Psoas muscle (tissue), 8 donors: ENCODE measurements at regions of chr17 and their contacts with region 1.

Region 1: DNA sequence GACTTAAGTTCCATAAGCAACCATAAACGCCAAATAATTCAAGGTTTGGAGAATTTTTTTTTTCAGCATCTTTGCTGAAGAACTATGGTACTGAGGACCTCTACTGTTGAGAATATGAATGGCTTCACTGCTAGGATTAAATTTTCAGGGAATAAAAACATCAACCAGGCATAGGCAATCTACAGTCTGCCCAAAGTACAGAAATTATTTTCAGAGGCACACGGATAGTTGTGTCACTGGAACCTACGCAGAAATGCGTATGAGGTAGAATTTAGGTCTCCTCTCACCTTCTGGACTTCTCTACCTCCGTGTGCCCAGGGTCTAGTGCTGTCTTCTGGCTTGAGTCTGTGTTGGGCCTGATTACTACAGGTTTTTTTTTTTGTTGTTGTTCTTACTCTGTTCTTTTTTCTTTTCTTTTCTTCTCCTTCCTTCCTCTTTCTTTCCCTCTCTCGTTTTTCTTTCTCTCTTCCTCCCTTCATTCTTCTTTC is 39.7 kb downstream of the NACA2 start:
- DNase-seq: no peak
- ATAC-seq: no peak
- H3K4me3 ChIP-seq: no peak overlapping the region
- H3K27ac ChIP-seq: no peak overlapping the region
- H3K4me1 ChIP-seq: no peaks in the 10 kb centered on the region
- H3K27me3 ChIP-seq: peaks cover 0 to 10% (median 0%) of the 10 kb centered on the region in 3 donors
- CTCF ChIP-seq: peak; percentile 54

Region 2: DNA sequence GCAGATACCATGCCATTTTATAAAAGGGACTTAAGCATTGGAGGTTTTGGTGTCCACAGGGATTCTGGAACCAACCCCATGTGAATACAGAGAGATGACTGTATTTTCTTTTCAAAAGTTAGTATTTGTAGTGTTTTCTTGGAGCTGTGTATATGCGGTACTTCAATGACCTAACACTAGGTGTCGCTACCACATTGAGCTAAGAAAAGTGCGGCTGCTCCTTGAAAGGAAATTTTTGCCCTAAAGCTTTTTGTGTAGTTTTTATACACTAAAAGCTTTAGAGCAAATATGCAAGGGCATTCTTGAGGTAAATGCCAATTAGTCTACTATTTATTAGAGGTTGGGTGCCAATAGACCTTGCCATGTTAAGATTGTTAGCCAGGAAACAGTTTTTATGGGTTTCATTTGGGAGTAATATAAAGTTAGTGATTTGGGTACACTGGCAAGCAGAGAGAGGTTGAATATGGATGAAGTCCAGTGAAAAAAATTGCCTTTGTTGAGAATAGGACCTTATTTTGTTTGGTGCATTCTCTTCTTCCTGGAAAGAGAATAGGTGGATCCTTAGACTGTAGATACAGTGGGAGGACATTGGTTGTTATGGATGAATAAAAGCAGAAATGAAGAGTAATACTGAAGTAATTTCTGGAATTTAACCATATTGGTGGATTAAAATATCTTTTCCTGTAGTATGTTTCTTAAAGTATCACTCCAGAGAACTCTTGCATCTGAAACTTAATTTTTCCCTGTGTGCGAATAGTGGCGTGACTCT is 830.4 kb before region 1 on chr17:
- intact Hi-C with region 1: loop called in 1 of 2 experiments (anchors 10 kb)
- DNase-seq: no peak
- ATAC-seq: peak in 2 of 4 donors; percentile 42 to 69
- H3K4me3 ChIP-seq: no peak overlapping the region
- H3K27ac ChIP-seq: no peak overlapping the region
- H3K4me1 ChIP-seq: no peaks in the 10 kb centered on the region
- H3K27me3 ChIP-seq: no peaks in the 10 kb centered on the region
- CTCF ChIP-seq: peak; percentile 89

Region 3: DNA sequence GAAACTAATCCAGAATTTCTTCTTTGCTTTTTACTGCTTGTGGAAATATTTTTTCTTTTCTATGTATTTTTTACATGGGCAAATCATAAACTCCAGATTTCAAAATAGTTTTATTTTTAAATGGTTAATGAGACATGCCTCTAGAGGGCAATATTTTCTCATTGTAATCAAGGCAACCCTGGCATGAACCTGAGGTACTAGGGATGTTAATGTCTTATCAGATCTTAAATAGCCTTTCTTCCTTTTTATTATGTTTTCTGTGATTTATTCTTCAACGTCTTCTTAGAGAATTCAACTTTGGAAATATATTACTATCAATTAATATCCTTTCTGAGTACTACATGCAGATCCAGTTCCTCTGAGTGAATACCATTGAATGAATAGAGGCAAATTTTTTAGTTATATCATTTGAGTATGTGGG is 549.0 kb before region 1 on chr17:
- intact Hi-C with region 1: loop called in 1 of 2 experiments (anchors 10 kb)
- DNase-seq: no peak
- ATAC-seq: peak in 1 of 4 donors; percentile 50
- H3K4me3 ChIP-seq: no peak overlapping the region
- H3K27ac ChIP-seq: no peak overlapping the region
- H3K4me1 ChIP-seq: no peaks in the 10 kb centered on the region
- H3K27me3 ChIP-seq: no peaks in the 10 kb centered on the region
- CTCF ChIP-seq: peak; percentile 48

Region 4: GRCh38 chr17:61770752-61771533 is 219.6 kb after region 1 on chr17:
- intact Hi-C with region 1: no loop called
- DNase-seq: no peak
- ATAC-seq: no peak
- H3K4me3 ChIP-seq: no peak overlapping the region
- H3K27ac ChIP-seq: no peak overlapping the region
- H3K4me1 ChIP-seq: no peaks in the 10 kb centered on the region
- H3K27me3 ChIP-seq: no peaks in the 10 kb centered on the region
- CTCF ChIP-seq: no peak

Region 5: DNA sequence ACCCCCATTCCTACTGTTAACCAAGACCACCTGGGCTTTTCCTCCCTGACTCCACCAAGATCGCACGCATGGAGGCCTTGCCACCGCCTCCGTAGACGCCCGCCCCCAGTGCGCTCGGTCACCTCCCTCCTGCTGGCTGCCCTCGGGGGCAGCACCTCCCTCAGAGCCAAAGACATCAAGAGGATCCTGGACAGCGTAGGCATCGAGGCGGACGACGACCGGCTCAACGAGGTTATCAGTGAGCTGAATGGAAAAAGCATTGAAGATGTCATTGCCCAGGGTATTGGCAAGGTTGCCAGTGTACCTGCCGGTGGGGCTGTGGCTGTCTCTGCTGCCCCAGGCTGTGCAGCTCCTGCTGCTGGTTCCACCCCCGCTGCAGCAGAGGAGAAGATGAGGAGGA is 830.3 kb after region 1 on chr17:
- intact Hi-C with region 1: no loop called
- DNase-seq: no peak
- ATAC-seq: no peak
- H3K4me3 ChIP-seq: no peak overlapping the region
- H3K27ac ChIP-seq: no peak overlapping the region
- H3K4me1 ChIP-seq: no peaks in the 10 kb centered on the region
- H3K27me3 ChIP-seq: peaks cover 3 to 5% (median 4%) of the 10 kb centered on the region in 3 donors
- CTCF ChIP-seq: no peak